Psoas muscle (tissue), 8 donors: ENCODE measurements at regions of chr15 and their contacts with region 1.

Region 1: DNA sequence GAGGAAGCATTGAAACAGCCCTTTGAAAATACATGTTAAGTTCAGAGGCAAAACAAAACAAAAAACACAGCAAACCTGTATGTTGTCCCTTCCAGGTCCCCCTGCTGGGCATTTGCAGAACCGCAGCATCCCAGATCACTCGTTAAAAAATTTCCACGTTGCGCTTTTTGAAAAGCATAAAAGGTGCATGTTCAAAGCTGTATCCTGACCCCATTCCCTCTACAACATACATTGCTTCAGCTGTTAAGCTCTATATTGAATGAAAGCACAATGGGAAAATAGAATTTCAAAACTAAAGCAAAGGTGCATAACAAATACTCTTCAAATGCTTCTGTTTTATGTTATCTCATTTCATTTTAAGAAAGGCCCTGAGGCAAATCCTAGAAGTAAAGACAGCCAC is 328.3 kb downstream of the THSD4 start:
- DNase-seq: peak; percentile 41 to 68
- ATAC-seq: peak in 3 of 4 donors; percentile 34 to 68 (median 60)
- H3K4me3 ChIP-seq: no peak overlapping the region
- H3K27ac ChIP-seq: no peak overlapping the region
- H3K4me1 ChIP-seq: no peaks in the 10 kb centered on the region
- H3K27me3 ChIP-seq: no peaks in the 10 kb centered on the region
- CTCF ChIP-seq: peak; percentile 80

Region 2: DNA sequence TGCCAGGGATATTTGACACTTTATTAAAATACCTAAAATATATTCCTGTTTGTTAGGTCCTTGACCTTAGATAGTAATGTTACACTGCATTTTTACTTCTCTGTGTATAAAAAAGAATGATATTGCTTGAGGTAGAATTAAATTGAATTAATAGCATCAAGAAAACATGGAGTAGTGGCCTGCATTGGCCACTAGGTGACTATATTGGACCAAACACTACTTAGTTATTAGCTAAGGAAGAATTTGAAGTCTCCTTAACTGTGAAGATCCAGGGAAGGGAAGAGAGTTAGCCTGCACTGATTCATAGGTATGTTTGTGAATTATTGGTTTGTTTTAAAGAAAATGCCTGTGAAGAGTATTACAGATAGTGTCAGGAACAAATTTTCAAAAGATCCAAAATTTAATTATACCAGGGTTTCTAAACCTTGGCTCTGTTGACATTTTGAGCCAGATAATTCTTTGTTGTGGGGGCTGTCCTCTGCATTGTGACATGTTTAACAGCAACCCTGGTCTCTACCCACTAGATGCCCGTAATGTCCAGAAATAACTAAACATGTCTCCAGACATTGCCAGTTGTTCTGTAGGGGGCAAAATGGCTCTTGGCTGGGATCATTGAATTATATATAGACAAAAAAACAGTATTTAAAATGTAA is 431.9 kb before region 1 on chr15:
- intact Hi-C with region 1: loop called (anchors 5 to 10 kb)
- DNase-seq: no peak
- ATAC-seq: peak in 3 of 4 donors; percentile 49 to 77 (median 49)
- H3K4me3 ChIP-seq: no peak overlapping the region
- H3K27ac ChIP-seq: no peak overlapping the region
- H3K4me1 ChIP-seq: no peaks in the 10 kb centered on the region
- H3K27me3 ChIP-seq: no peaks in the 10 kb centered on the region
- CTCF ChIP-seq: peak; percentile 64

Region 3: GRCh38 chr15:71386448-71387236 is 56.9 kb before region 1 on chr15:
- intact Hi-C with region 1: loop called (anchors 1 to 2 kb)
- DNase-seq: no peak
- ATAC-seq: peak in 2 of 4 donors; percentile 64 to 79
- H3K4me3 ChIP-seq: no peak overlapping the region
- H3K27ac ChIP-seq: no peak overlapping the region
- H3K4me1 ChIP-seq: peaks cover 19% of the 10 kb centered on the region
- H3K27me3 ChIP-seq: no peaks in the 10 kb centered on the region
- CTCF ChIP-seq: peak; percentile 64